ENCODE measurements at regions of chr5 and their contacts with region 1.

Region 1: GRCh38 chr5:164504141-164504772 is 998.8 kb downstream of the MAT2B start:
- DNase-seq: peak in 1 of 3 donors; percentile 75
- ATAC-seq: peak; percentile 40
- H3K4me3 ChIP-seq: no peak overlapping the region
- H3K4me1 ChIP-seq: no peaks in the 10 kb centered on the region
- CTCF ChIP-seq: peak; percentile 39

Region 2: GRCh38 chr5:163564321-163564938 is 939.8 kb before region 1 on chr5:
- intact Hi-C with region 1: loop called (anchors 5 to 10 kb)
- DNase-seq: peak in 2 of 3 donors; percentile 33 to 85
- ATAC-seq: peak; percentile 78
- H3K4me3 ChIP-seq: no peak overlapping the region
- H3K4me1 ChIP-seq: peaks cover 17% of the 10 kb centered on the region
- CTCF ChIP-seq: peak; percentile 68

Region 3: DNA sequence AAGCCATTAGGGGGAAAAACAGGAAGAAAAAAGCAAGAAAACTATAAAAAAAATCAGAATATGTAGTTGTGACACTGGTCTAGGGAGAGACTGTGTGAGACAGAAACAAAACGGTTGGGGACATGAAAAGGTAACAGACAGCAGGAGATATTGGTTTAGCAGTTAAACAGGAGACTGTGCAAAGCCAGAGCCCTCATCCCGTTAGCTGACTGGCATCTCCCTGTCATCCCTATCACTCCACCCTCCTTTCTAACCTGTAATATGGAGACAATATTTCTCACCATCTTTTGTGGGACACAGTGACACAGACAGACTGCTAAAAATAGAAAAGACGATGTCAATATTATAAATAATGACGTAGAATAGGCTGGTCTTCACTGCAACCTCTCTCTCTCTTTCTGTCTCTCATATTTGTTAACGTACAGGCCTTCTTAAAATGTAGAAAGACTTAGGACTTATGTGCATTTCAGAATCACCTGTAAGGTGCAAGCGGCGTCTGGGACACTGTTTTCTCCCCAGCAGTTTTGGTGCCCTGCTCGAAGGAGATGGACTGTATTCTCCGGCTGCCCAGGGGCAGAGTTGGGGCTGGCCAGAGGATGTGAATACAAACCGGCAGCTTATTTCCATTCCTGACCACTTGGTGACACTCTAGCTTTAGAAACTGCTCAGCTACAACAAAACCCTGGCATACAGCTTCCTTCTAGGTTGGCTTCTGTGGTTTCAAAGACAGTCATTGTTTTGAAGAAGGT is 808.3 kb before region 1 on chr5:
- intact Hi-C with region 1: loop called in 1 of 2 experiments (anchors 10 kb)
- DNase-seq: peak in 2 of 3 donors; percentile 27 to 68
- ATAC-seq: peak; percentile 92
- H3K4me3 ChIP-seq: no peak overlapping the region
- H3K4me1 ChIP-seq: no peaks in the 10 kb centered on the region
- CTCF ChIP-seq: peak; percentile 13

Region 4: DNA sequence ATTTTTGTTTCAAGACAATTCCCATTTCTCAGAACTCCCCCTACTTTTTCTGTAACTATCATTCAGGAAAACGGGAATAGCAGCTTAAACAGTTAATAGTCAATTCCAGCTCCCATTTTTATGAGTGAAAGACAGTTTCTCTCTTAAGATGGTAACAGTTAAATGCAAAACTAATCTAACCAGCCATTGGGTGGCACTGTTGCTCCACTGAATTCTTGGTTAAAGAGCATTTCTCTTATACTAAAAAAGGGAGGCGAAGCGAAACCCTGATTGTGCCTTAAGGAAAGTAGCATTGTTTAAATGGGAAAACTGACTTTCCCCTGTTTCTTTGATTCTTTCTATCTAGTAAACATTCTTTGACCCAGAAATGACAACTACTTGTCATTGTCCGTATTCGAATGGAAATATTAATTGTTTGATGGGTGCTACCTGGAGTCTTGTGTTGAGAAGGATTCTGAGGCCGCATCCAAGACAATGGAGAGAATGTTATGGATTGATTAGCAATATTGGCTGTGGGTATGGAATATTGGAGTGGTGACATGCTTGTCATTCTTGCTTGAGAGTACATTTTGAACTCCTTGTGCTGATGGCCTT is 491.1 kb before region 1 on chr5:
- intact Hi-C with region 1: loop called (anchors 10 kb)
- DNase-seq: peak in 1 of 3 donors; percentile 85
- ATAC-seq: peak; percentile 51
- H3K4me3 ChIP-seq: no peak overlapping the region
- H3K4me1 ChIP-seq: no peaks in the 10 kb centered on the region
- CTCF ChIP-seq: no peak

Region 5: GRCh38 chr5:164127527-164127926 is 376.7 kb before region 1 on chr5:
- intact Hi-C with region 1: no loop called
- DNase-seq: no peak
- ATAC-seq: no peak
- H3K4me3 ChIP-seq: no peak overlapping the region
- H3K4me1 ChIP-seq: no peaks in the 10 kb centered on the region
- CTCF ChIP-seq: no peak